ENCODE measurements at regions of chr11 and their contacts with region 1.

Region 1: GRCh38 chr11:133927690-133928627 is 28.8 kb downstream of the IGSF9B start:
- DNase-seq: peak; percentile 56 to 81 (median 70)
- ATAC-seq: peak; percentile 76 to 83 (median 80)
- H3K4me3 ChIP-seq: peak overlapping the region in 4 of 12 donors; percentile 17 to 35 (median 25)
- H3K27ac ChIP-seq: no peak overlapping the region
- H3K4me1 ChIP-seq: peaks cover 0 to 15% (median 12%) of the 10 kb centered on the region in 12 donors
- H3K27me3 ChIP-seq: no peaks in the 10 kb centered on the region
- CTCF ChIP-seq: peak; percentile 75 to 95 (median 86)
- POLR2A ChIP-seq: no peak

Region 2: GRCh38 chr11:133864756-133865155 is 63.2 kb before region 1 on chr11:
- intact Hi-C with region 1: no loop called
- DNase-seq: no peak
- ATAC-seq: peak in 1 of 4 donors; percentile 20
- H3K4me3 ChIP-seq: no peak overlapping the region
- H3K27ac ChIP-seq: no peak overlapping the region
- H3K4me1 ChIP-seq: no peaks in the 10 kb centered on the region
- H3K27me3 ChIP-seq: peaks cover 0 to 18% (median 0%) of the 10 kb centered on the region in 9 donors
- CTCF ChIP-seq: no peak
- POLR2A ChIP-seq: no peak

Region 3: GRCh38 chr11:134040386-134041302 is 112.7 kb after region 1 on chr11:
- intact Hi-C with region 1: loop called in 7 of 10 experiments (anchors 2 to 10 kb)
- DNase-seq: peak in 2 of 5 donors; percentile 48 to 49
- ATAC-seq: no peak
- H3K4me3 ChIP-seq: no peak overlapping the region
- H3K27ac ChIP-seq: peak overlapping the region in 2 of 12 donors; percentile 57 to 93
- H3K4me1 ChIP-seq: peaks cover 0 to 61% (median 34%) of the 10 kb centered on the region in 12 donors
- H3K27me3 ChIP-seq: no peaks in the 10 kb centered on the region
- CTCF ChIP-seq: no peak
- POLR2A ChIP-seq: no peak

Region 4: GRCh38 chr11:134139873-134140331 is 211.9 kb after region 1 on chr11:
- intact Hi-C with region 1: loop called (anchors 2 to 10 kb)
- DNase-seq: peak in 4 of 5 donors; percentile 49 to 69 (median 67)
- ATAC-seq: peak; percentile 81 to 92 (median 88)
- H3K4me3 ChIP-seq: no peak overlapping the region
- H3K27ac ChIP-seq: peak overlapping the region in 5 of 12 donors; percentile 6 to 72 (median 26)
- H3K4me1 ChIP-seq: peaks cover 0 to 17% (median 5%) of the 10 kb centered on the region in 12 donors
- H3K27me3 ChIP-seq: no peaks in the 10 kb centered on the region
- CTCF ChIP-seq: peak; percentile 73 to 97 (median 89)
- POLR2A ChIP-seq: no peak